HepG2 (cell line): ENCODE measurements at regions of chr2 and their contacts with region 1.

Region 1: DNA sequence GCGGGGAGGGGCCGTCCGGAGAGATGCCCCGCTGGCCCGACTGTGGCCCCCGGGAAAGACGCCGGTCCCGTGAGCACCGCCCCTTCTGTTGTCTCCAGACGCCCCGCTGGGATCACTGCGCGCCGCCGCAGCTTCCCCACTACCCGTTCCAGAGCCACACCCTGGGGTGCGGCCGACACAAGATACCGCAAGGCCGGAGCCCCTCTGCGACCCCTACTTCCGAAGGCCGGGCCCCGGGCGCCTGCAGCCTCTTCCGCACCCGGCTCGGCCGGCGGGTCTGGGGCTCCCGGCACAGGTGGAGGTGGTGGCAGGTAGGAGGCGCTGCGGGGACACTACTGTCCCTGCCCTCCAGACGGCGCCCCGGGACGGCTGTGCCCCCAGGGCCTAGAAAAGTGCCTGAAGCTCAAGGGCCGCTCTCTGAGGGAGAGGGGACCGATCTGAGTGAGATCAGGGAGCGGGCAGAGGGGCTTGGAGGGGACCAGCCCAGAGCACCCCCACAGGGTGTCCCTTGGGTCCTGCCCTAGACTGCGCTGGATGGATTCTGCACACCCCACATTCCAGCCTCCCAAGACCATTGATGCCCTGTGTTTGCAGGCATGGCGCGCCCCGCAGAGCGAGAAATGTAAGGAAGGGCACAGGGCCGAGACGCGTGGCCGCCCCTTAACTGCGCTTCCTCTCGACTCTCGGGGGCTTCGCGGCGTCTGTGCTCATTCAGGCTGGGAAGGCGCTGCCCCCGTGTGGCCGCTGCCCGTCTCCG is 80.0 kb downstream of the GFPT1 start:
- DNase-seq: peak; percentile 47
- ATAC-seq: peak; percentile 83
- H3K4me3 ChIP-seq: peak overlapping the region in 1 of 3 experiments; percentile 34; a peak in 1 of 6 replicates
- H3K27ac ChIP-seq: no peak overlapping the region
- H3K4me1 ChIP-seq: peaks cover 29% of the 10 kb centered on the region
- H3K27me3 ChIP-seq: no peaks in the 10 kb centered on the region
- CTCF ChIP-seq: peak; percentile 98
- EP300 ChIP-seq: no peak
- POLR2A ChIP-seq: no peak
- RAD21 ChIP-seq: peak; percentile 98

Region 2: DNA sequence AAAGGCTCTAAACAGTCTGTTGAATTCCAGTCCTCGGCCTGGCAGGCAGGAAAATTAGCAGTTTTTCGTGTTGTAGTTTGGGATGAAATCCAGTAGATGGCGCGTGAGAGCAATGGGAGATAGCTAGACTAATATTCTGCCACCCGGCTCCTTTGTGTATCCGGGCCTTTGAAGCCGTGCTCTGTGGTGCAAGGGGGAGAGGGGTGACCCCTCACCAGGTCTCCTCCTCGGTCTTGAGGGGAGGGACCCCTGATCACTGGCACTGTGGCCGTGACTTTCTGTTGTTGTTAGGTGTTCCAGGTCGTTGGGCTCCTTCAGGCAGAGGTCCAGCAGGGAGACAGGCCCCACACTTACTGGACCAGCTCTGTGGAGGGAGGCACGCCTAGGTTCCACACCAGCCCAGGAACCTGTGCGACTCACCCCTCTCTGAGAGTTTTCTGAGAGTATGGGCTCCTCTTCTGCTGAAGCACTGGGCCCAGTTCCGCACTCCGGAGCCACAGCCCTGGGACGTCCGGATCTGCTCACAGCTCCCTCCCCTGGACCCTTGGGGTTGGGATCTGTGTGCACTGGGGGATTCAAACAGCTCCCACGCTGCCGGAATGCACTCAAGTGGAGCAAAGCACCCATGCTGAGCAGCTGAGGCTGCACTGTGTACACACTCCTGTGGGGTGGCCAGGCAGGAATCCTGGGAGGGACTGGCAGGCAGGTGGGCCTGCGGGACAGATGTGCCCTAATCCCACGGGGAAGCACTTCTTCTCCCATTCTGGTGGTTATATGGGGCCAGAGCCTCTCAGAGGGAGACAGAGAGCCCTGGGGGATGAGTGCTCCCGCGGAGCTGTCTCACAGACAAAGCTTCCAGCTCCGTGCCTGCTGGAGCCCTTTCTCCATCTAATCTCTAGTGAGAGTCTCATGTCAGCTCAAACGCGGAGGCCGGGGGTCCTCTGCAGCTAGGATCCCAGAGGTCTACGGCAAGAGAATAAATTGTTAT is 363.1 kb before region 1 on chr2:
- CTCF ChIA-PET with region 1: interaction called, 9 read pairs
- POLR2A ChIA-PET with region 1: no interaction called
- in situ Hi-C with region 1: loop called (anchors 10 kb)
- intact Hi-C with region 1: loop called (anchors 1 kb)
- DNase-seq: peak; percentile 72
- ATAC-seq: peak; percentile 94
- H3K4me3 ChIP-seq: peak overlapping the region; percentile 25 to 66 (median 31); a peak in 5 of 6 replicates
- H3K27ac ChIP-seq: no peak overlapping the region
- H3K4me1 ChIP-seq: peaks cover 18% of the 10 kb centered on the region
- H3K27me3 ChIP-seq: no peaks in the 10 kb centered on the region; a peak in 2 of 5 replicates
- CTCF ChIP-seq: peak; percentile 91
- EP300 ChIP-seq: peak in 1 of 2 experiments; percentile 8; a peak in 1 of 4 replicates
- POLR2A ChIP-seq: no peak
- RAD21 ChIP-seq: peak; percentile 70

Region 3: GRCh38 chr2:69012310-69013141 is 294.5 kb before region 1 on chr2:
- CTCF ChIA-PET with region 1: interaction called, 13 read pairs
- POLR2A ChIA-PET with region 1: no interaction called
- in situ Hi-C with region 1: loop called (anchors 5 kb)
- intact Hi-C with region 1: loop called (anchors 1 kb)
- DNase-seq: peak; percentile 66
- ATAC-seq: peak; percentile 55
- H3K4me3 ChIP-seq: peak overlapping the region; percentile 67 to 94 (median 72)
- H3K27ac ChIP-seq: no peak overlapping the region
- H3K4me1 ChIP-seq: peaks cover 36% of the 10 kb centered on the region
- H3K27me3 ChIP-seq: peaks cover 0 to 16% of the 10 kb centered on the region in 2 experiments; a peak in 3 of 5 replicates
- CTCF ChIP-seq: peak; percentile 84
- EP300 ChIP-seq: no peak
- POLR2A ChIP-seq: no peak
- RAD21 ChIP-seq: no peak

Region 4: DNA sequence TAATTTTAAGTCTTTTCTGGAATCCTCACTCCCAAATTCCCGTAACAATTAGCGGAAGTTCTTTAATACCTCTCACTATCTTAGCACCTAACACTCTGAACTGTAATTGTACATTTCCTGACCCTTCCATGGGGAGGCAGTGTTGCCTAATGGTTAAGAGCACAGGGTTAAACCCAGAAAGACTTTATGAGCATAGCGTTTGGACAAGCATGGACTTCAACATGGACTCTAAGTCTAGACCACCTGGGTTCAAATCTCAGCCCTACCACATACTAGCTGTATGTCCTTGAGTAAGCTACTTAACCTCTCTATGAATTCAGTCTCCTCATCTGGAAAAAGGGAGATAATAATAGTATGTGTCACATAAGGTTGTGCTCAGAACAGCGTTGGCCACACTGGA is 281.0 kb before region 1 on chr2:
- CTCF ChIA-PET with region 1: interaction called, 37 read pairs
- POLR2A ChIA-PET with region 1: no interaction called
- in situ Hi-C with region 1: no loop called
- intact Hi-C with region 1: loop called (anchors 1 kb)
- DNase-seq: peak; percentile 78
- ATAC-seq: peak; percentile 91
- H3K4me3 ChIP-seq: no peak overlapping the region
- H3K27ac ChIP-seq: no peak overlapping the region
- H3K4me1 ChIP-seq: peaks cover 24% of the 10 kb centered on the region
- H3K27me3 ChIP-seq: no peaks in the 10 kb centered on the region
- CTCF ChIP-seq: peak; percentile 92
- EP300 ChIP-seq: no peak
- POLR2A ChIP-seq: no peak
- RAD21 ChIP-seq: peak; percentile 93

Region 5: DNA sequence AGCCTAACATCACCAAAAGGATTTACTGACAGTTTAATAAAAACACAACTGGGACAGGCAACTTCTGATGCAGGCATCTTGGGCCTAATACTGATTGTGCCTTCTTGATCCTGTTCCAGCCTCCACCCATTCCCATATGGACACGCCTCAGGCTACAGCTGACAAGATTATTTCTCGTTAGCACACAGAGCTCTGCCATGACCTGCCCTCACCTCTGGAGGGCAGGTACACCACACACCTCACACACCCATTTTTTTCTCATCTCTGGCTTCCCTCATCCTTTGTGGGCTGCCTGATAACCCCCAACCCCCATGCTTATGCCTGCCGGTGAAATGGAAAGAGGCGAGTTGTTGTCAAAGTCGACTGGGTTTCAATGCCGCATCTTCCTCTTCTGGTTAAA is 147.0 kb before region 1 on chr2:
- CTCF ChIA-PET with region 1: interaction called, 12 read pairs
- POLR2A ChIA-PET with region 1: no interaction called
- in situ Hi-C with region 1: loop called (anchors 5 kb)
- intact Hi-C with region 1: loop called (anchors 2 kb)
- DNase-seq: peak; percentile 62
- ATAC-seq: peak; percentile 96
- H3K4me3 ChIP-seq: no peak overlapping the region
- H3K27ac ChIP-seq: no peak overlapping the region
- H3K4me1 ChIP-seq: peaks cover 47% of the 10 kb centered on the region
- H3K27me3 ChIP-seq: no peaks in the 10 kb centered on the region
- CTCF ChIP-seq: peak; percentile 81
- EP300 ChIP-seq: no peak
- POLR2A ChIP-seq: no peak
- RAD21 ChIP-seq: peak; percentile 86

Region 6: DNA sequence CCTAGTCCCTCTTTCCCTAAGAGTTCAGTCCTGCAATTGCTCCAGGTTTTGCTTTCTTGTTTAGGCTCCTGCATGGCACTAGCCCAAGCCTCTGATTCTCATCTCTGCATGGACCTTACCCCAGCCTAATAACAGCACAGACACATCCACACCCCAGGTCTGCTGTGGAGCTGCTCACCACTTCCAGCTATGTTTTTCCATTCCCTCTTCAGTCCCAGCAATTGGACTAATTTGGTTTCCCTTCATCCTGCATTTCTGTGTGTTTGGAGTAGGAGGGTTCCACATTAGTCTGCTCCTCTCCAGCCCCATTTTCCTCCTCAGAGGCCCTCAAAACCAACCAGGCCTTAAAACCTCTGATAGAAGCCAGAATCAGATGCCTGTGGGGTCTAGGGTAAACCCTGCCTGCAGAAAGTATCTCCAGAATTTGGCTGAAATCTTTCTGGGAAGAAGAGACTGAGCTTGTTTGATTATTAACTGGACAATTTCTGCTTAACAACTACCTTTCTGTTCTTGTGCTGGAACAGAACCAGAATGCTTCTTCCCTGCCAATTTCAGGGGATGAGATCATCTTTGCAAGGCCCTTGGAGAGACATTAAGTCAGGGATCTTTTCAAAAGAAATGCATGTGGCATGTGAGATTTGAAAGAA is 15.9 kb before region 1 on chr2:
- CTCF ChIA-PET with region 1: no interaction called
- POLR2A ChIA-PET with region 1: no interaction called
- in situ Hi-C with region 1: no loop called
- intact Hi-C with region 1: no loop called
- DNase-seq: peak; percentile 70
- ATAC-seq: peak; percentile 70
- H3K4me3 ChIP-seq: no peak overlapping the region; a peak in 1 of 6 replicates
- H3K27ac ChIP-seq: peak overlapping the region; percentile 32
- H3K4me1 ChIP-seq: peaks cover 34% of the 10 kb centered on the region
- H3K27me3 ChIP-seq: no peaks in the 10 kb centered on the region
- CTCF ChIP-seq: no peak
- EP300 ChIP-seq: no peak
- POLR2A ChIP-seq: no peak
- RAD21 ChIP-seq: no peak

Region 7: DNA sequence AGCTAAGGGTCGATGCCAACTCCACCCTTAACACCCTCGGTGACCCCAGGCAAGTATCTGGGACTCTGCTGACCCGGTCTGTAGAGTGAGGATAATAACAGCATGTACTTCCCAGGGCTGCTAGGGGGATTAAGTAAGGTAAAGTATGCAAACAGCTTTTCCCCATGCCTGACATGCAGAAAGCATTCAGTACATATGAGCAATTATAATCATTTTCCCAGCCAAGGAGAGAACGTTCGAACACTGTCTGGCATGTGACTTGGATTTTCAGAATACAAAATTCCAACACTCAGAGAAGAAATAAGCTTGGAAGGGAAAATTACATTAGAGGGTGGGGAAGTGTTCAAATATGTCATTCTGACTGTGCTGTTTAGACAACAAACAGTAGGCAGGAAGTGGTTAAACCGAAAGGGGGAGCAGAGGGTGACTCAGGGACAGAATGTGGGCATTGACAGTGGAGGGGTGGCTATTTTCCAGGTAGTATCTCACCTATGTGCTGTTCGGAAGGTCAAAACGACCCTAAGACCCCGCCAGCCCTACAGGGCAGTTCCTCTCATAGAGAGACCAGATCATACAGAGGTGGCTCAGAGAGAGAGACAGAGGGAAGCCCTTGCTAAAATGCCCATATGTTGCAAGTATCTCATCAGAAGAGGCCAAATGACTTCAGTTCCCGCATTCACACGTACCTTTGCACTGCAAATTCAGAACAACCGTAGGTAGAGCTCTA is 639.5 kb after region 1 on chr2:
- CTCF ChIA-PET with region 1: no interaction called
- POLR2A ChIA-PET with region 1: no interaction called
- in situ Hi-C with region 1: no loop called
- intact Hi-C with region 1: no loop called
- DNase-seq: peak; percentile 82
- ATAC-seq: peak; percentile 62
- H3K4me3 ChIP-seq: peak overlapping the region; percentile 46 to 59 (median 48)
- H3K27ac ChIP-seq: peak overlapping the region; percentile 51
- H3K4me1 ChIP-seq: peaks cover 42% of the 10 kb centered on the region
- H3K27me3 ChIP-seq: no peaks in the 10 kb centered on the region
- CTCF ChIP-seq: 0 out of 2 replicates have a peak, but pooled peaks have one; percentile 7
- EP300 ChIP-seq: peak in 1 of 2 experiments; percentile 89; a peak in 2 of 4 replicates
- POLR2A ChIP-seq: no peak
- RAD21 ChIP-seq: no peak